SK-N-SH (cell line): ENCODE measurements at regions of chr11 and their contacts with region 1.

Region 1: DNA sequence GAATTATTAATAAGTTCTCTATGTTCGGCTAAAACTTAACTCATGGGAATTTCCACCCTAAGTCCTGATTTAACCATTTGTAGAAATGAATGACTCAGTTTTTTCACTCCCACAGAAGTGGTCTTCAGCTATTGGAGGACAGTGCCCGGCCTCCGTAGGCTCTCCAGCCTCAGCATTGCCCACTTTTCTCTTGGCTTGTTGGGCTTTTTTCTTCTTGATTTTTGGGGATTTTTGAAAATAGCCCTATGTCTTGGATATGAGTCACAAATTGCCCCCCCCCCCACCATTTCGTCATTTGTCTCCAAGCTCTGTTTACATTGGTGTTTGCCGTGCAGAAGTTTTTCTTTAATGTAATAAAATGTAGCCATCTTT is 66.7 kb downstream of the PACS1 start:
- DNase-seq: no peak
- H3K4me3 ChIP-seq: no peak overlapping the region
- H3K27ac ChIP-seq: peak overlapping the region in 1 of 2 experiments; percentile 68; a peak in 2 of 4 replicates
- H3K4me1 ChIP-seq: peaks cover 20 to 28% of the 10 kb centered on the region in 2 experiments; a peak in 2 of 4 replicates
- H3K27me3 ChIP-seq: no peaks in the 10 kb centered on the region
- CTCF ChIP-seq: no peak
- EP300 ChIP-seq: no peak
- RAD21 ChIP-seq: no peak

Region 2: DNA sequence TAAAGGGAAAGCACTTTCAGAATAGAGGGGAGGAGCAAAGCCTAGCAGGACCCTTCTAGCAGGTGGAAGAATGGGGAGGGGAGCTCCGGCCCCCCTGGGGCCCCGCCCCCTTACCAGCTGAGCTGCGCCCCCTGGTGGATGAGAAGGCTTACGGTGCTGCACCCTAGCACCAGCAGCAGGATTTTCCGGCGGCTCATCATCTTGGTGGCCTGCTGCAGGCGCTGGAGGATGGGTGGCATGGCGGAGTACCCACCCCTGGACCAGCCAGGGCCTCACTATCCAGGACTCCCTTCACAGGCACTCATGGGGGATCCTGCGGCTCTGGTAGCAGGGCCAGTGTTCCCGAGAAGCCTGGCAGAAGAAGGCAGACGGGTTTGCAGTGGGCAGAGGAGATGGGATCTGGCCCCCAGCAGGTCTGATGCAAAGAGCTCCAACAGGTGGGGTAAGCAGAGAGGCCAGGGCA is 91.5 kb before region 1 on chr11:
- CTCF ChIA-PET with region 1: interaction called, 19 read pairs
- POLR2A ChIA-PET with region 1: no interaction called
- DNase-seq: peak; percentile 97
- H3K4me3 ChIP-seq: peak overlapping the region in 1 of 2 experiments; percentile 53; a peak in 1 of 4 replicates
- H3K27ac ChIP-seq: peak overlapping the region in 1 of 2 experiments; percentile 22; a peak in 1 of 4 replicates
- H3K4me1 ChIP-seq: peaks cover 6 to 32% of the 10 kb centered on the region in 2 experiments; a peak in 1 of 4 replicates
- H3K27me3 ChIP-seq: no peaks in the 10 kb centered on the region
- CTCF ChIP-seq: peak; percentile 86
- EP300 ChIP-seq: no peak
- RAD21 ChIP-seq: peak; percentile 45

Region 3: GRCh38 chr11:66112601-66113098 is 24.1 kb before region 1 on chr11:
- CTCF ChIA-PET with region 1: interaction called, 11 read pairs
- POLR2A ChIA-PET with region 1: no interaction called
- DNase-seq: no peak
- H3K4me3 ChIP-seq: peak overlapping the region in 1 of 2 experiments; percentile 43; a peak in 2 of 4 replicates
- H3K27ac ChIP-seq: peak overlapping the region; percentile 80 to 98
- H3K4me1 ChIP-seq: peaks cover 28 to 63% of the 10 kb centered on the region in 2 experiments
- H3K27me3 ChIP-seq: no peaks in the 10 kb centered on the region
- CTCF ChIP-seq: no peak
- EP300 ChIP-seq: peak; percentile 23 to 63; a peak in 2 of 4 replicates
- RAD21 ChIP-seq: no peak

Region 4: DNA sequence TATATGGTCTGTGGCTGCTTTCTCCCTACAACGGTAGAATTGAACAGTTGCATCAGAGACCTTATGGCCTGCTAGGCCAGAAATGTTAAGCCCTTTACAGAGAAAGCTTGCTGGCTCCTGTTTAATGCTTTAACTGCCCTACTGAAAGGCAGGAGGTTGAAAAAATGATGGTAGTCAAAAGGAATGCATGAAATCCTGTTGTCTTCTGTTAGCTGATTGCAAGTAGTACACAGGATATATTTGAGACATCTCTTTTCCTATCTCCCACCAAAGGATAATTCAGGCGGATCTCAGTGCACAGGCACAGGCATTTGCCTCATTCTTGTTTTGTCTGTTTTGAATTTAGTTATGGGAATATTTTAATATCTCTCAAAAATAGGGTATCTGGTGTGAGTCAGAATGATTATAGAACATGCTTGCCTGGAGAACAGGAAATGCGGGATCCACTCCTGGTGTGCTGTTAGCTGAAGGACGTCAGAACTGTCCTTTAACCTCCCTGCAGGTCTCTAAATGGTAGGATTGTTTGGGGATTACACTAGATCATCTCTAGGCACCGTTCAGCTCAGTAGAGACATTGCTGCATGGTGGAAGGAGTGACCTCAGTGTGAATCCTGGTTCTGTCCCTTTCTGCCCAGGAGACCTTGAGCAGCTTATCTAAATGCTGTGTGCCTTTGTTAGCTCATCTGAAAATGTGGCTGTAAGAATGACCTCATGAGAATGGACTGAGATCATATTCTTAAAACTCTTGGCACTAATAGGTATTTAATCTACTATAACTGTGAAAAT is 17.2 kb before region 1 on chr11:
- CTCF ChIA-PET with region 1: interaction called, 22 read pairs
- POLR2A ChIA-PET with region 1: interaction called, 4 read pairs
- DNase-seq: peak; percentile 61
- H3K4me3 ChIP-seq: no peak overlapping the region; a peak in 1 of 4 replicates
- H3K27ac ChIP-seq: peak overlapping the region; percentile 98 to 99
- H3K4me1 ChIP-seq: peaks cover 49 to 66% of the 10 kb centered on the region in 2 experiments
- H3K27me3 ChIP-seq: no peaks in the 10 kb centered on the region
- CTCF ChIP-seq: no peak
- EP300 ChIP-seq: peak; percentile 78 to 86
- RAD21 ChIP-seq: no peak

Region 5: DNA sequence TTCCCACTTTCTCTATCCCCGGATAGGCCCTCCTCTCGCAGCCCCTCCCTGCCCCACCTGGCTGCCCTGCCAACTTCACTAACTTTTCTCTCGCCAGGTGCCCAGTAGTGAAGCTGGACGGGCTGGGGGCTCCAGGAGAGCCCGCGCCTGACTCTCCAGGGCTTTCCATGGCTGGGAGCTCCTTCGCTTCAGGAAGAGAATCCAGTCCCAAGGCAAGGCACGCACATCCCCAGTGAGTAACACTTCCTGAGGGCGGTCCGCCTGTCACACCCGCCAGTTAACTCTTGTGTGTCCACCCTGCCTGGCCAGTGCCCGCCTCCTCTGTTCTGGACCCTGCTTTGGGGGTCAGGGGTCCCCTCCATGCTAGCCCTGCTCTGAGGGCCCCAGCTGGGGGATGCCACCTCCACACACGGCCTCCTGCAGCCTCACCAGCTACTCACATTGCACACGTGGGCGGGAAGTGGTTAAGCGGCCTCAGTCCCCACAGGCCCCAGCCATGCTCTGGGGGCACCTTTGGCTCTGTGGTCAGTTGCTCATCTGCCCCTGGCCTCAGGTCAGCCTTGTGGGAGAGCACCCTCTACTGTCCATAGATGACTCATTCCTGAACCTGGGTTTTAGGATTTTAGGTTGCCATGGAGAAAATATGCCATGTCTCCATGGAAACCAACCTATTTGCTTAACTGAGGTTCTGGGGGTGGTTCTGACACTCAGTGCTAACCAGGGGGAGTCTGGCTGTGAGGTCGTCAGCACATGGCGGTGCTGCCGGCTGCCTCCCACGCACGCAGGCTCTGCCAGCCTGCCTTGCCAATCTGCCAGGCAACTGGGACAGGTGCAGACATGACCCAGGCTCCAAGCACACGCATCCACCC is 199.7 kb after region 1 on chr11 and contains the start of gene RIN1:
- CTCF ChIA-PET with region 1: no interaction called
- POLR2A ChIA-PET with region 1: no interaction called
- DNase-seq: peak; percentile 94
- H3K4me3 ChIP-seq: peak within 1 kb of the TSS; percentile 68 to 69
- H3K27ac ChIP-seq: peak within 1 kb of the TSS; percentile 94
- H3K4me1 ChIP-seq: peaks cover 27 to 44% of the 10 kb centered on the region in 2 experiments
- H3K27me3 ChIP-seq: no peaks in the 10 kb centered on the region
- CTCF ChIP-seq: peak; percentile 56
- EP300 ChIP-seq: peak; percentile 47 to 78; a peak in 3 of 4 replicates
- RAD21 ChIP-seq: peak; percentile 81
- polyA plus RNA-seq, gene RIN1: 13.0 and 16.9 TPM in 2 replicates